HepG2 (cell line): ENCODE measurements at regions of chr9 and their contacts with region 1.

Region 1: GRCh38 chr9:133184962-133185361 is 21.2 kb upstream of the GBGT1 start:
- DNase-seq: peak; percentile 64
- ATAC-seq: peak; percentile 61
- H3K4me3 ChIP-seq: no peak overlapping the region
- H3K27ac ChIP-seq: no peak overlapping the region
- H3K4me1 ChIP-seq: no peaks in the 10 kb centered on the region
- H3K27me3 ChIP-seq: peaks cover 6 to 26% of the 10 kb centered on the region in 2 experiments; a peak in 3 of 5 replicates
- CTCF ChIP-seq: peak; percentile 76
- EP300 ChIP-seq: no peak
- POLR2A ChIP-seq: no peak
- RAD21 ChIP-seq: 0 out of 2 replicates have a peak, but pooled peaks have one; percentile 19

Region 2: GRCh38 chr9:132944302-132945185 is 240.4 kb before region 1 on chr9 and contains the start of gene TSC1:
- CTCF ChIA-PET with region 1: no interaction called
- POLR2A ChIA-PET with region 1: no interaction called
- in situ Hi-C with region 1: no loop called
- intact Hi-C with region 1: no loop called
- DNase-seq: peak; percentile 83
- ATAC-seq: peak; percentile 86
- H3K4me3 ChIP-seq: peak within 1 kb of the TSS; percentile 86 to 100 (median 95)
- H3K27ac ChIP-seq: peak within 1 kb of the TSS; percentile 99
- H3K4me1 ChIP-seq: peaks cover 62% of the 10 kb centered on the region
- H3K27me3 ChIP-seq: peaks cover 0 to 3% of the 10 kb centered on the region in 2 experiments; a peak in 2 of 5 replicates
- CTCF ChIP-seq: 0 out of 2 replicates have a peak, but pooled peaks have one; percentile 7
- EP300 ChIP-seq: peak in 1 of 2 experiments; percentile 64; a peak in 1 of 4 replicates
- POLR2A ChIP-seq: peak; percentile 75 to 84
- RAD21 ChIP-seq: no peak
- total RNA-seq, gene TSC1: 26.3 and 31.6 TPM in 2 replicates

Region 3: DNA sequence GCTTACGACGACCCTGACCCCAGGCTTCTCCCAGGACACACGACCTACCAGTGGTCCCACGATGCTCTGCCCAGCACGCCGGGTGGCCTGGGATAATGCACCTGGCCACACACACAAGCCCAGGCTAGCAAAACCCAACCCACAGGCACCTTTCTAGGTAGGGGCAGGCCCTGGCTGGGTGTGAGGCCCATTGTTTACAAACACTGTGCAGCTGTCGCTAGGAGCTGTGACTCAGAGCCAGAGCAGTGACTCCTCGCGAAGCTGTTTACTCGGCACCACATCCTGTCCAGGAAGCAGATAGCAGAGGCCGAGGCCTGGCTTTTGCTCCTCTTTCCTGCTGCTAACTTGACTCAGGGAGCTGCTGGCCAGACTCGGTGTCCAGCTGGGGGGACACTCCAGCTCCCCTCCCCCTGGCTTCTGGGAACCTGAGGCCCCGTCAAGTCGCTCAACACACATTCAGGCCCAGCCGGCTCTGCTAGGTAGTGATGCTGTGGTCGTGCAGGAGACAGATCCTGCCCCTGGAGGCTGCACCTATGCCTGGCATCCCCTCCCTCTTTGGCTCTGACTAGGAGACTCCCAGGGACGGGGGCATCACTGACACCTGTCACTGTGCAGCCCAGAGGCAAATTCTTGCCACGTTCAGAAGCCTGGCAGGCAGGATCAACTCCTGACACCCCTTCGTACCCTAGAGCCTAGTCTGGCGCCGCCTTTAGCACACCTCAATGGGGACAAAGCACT is 51.1 kb before region 1 on chr9:
- CTCF ChIA-PET with region 1: no interaction called
- POLR2A ChIA-PET with region 1: no interaction called
- in situ Hi-C with region 1: no loop called
- intact Hi-C with region 1: no loop called
- DNase-seq: peak; percentile 91
- ATAC-seq: peak; percentile 98
- H3K4me3 ChIP-seq: peak overlapping the region in 1 of 3 experiments; percentile 55; a peak in 2 of 6 replicates
- H3K27ac ChIP-seq: peak overlapping the region; percentile 87
- H3K4me1 ChIP-seq: peaks cover 31% of the 10 kb centered on the region
- H3K27me3 ChIP-seq: no peaks in the 10 kb centered on the region
- CTCF ChIP-seq: peak; percentile 19; the same call in 1 of the 2 replicates
- EP300 ChIP-seq: peak; percentile 50 to 84; a peak in 3 of 4 replicates
- POLR2A ChIP-seq: peak in 1 of 2 experiments; percentile 66; a peak in 1 of 4 replicates
- RAD21 ChIP-seq: no peak

Region 4: DNA sequence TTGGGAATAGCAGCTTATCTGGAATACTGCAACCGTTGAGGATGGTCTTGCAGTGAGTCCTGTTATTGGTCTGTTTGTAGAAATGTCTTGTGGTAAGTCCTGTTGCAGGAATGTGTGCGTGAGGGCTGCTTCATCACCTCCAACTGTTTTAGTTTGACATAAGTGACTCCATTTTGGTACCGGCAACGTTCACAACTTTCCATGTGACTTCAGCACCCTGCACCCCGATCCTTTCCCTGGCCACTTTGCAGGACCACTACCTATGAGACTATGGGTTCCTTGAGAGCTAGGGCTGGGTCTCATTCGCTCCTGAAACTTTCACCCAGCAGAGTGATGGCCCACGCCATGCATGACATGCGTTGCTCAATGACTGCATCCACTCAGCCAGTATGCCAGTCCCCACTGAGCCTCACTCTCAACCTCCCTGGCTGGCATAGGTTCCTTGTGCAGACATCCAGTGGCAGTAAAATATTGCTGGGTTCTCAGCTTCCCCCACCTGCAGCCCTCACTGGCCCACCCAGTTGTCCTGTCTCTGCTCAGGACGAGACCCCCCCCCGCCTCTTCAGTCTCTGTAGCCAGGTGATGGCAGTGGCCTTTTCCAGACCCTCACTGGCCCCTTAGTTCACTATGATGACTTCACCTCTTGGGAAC is 143.0 kb after region 1 on chr9:
- CTCF ChIA-PET with region 1: interaction called, 7 read pairs
- POLR2A ChIA-PET with region 1: no interaction called
- in situ Hi-C with region 1: loop called (anchors 5 kb)
- intact Hi-C with region 1: loop called (anchors 2 kb)
- DNase-seq: no peak
- ATAC-seq: peak; percentile 31; the same call in 2 of the 3 replicates
- H3K4me3 ChIP-seq: no peak overlapping the region
- H3K27ac ChIP-seq: no peak overlapping the region
- H3K4me1 ChIP-seq: no peaks in the 10 kb centered on the region
- H3K27me3 ChIP-seq: no peaks in the 10 kb centered on the region; a peak in 1 of 5 replicates
- CTCF ChIP-seq: no peak
- EP300 ChIP-seq: no peak
- POLR2A ChIP-seq: 0 out of 4 replicates have a peak, but pooled peaks of 1 of the 2 experiments have one; percentile 18
- RAD21 ChIP-seq: no peak

Region 5: GRCh38 chr9:133334161-133334560 is 149.2 kb after region 1 on chr9:
- CTCF ChIA-PET with region 1: interaction called, 7 read pairs
- POLR2A ChIA-PET with region 1: no interaction called
- in situ Hi-C with region 1: loop called (anchors 5 kb)
- intact Hi-C with region 1: loop called (anchors 2 kb)
- DNase-seq: no peak
- ATAC-seq: no peak
- H3K4me3 ChIP-seq: peak overlapping the region in 2 of 3 experiments; percentile 82 to 91; a peak in 3 of 6 replicates
- H3K27ac ChIP-seq: no peak overlapping the region
- H3K4me1 ChIP-seq: peaks cover 22% of the 10 kb centered on the region
- H3K27me3 ChIP-seq: no peaks in the 10 kb centered on the region; a peak in 1 of 5 replicates
- CTCF ChIP-seq: no peak
- EP300 ChIP-seq: no peak
- POLR2A ChIP-seq: no peak
- RAD21 ChIP-seq: no peak

Region 6: GRCh38 chr9:133485361-133486260 is 300.6 kb after region 1 on chr9:
- CTCF ChIA-PET with region 1: interaction called, 13 read pairs
- POLR2A ChIA-PET with region 1: no interaction called
- in situ Hi-C with region 1: loop called (anchors 5 kb)
- intact Hi-C with region 1: loop called (anchors 2 kb)
- DNase-seq: no peak
- ATAC-seq: peak; percentile 67
- H3K4me3 ChIP-seq: peak overlapping the region; percentile 27 to 70 (median 47); a peak in 4 of 6 replicates
- H3K27ac ChIP-seq: no peak overlapping the region
- H3K4me1 ChIP-seq: peaks cover 54% of the 10 kb centered on the region
- H3K27me3 ChIP-seq: peaks cover 4 to 54% of the 10 kb centered on the region in 2 experiments
- CTCF ChIP-seq: no peak
- EP300 ChIP-seq: no peak
- POLR2A ChIP-seq: no peak
- RAD21 ChIP-seq: no peak